ENCODE measurements at regions of chr16 and their contacts with region 1.

Region 1: DNA sequence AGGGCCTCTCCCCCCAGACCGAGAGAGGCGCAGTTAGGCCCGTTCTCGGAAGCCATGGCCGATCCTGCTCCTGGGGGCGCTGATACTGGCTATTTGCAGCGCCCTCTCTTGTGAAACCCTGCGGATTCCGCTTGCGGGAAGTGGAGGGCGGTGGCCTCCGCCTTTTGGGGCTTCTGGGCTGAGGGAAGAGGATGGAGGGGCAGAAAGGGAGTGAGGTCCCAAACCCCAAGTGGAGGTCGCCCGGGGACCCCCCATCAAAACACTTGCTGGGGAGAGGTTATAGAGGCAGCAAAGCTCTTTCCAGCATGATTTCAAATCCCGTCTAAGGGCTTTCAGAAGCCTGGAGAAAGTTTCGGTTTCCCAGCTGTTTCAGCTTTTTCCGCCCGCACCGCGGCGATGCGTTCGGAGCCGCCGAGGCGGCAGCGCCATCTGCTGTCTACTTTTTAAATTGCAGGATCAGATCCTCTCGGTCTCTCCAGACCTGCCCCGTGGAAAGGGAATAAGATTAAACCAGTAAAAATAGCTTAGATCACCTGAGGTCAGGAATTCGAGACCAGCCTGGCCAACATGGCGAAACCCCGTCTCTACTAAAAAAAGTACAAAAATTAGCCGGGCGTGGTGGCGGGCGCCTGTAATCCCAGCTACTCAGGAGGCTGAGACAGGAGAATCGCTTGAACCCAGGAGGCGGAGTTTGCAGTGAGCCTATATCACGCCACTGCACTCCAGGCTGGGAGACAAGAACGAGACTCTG is 15.8 kb downstream of the SNX20 start:
- DNase-seq: peak; percentile 89
- ATAC-seq: peak; percentile 54
- H3K4me3 Mint-ChIP-seq: peak overlapping the region; percentile 51
- H3K27ac Mint-ChIP-seq: peak overlapping the region; percentile 92
- H3K4me1 Mint-ChIP-seq: peaks cover 42% of the 10 kb centered on the region
- H3K27me3 Mint-ChIP-seq: no peaks in the 10 kb centered on the region

Region 2: GRCh38 chr16:50210266-50211038 is 454.9 kb before region 1 on chr16:
- CTCF ChIA-PET with region 1: interaction called, 16 read pairs
- DNase-seq: peak; percentile 80
- ATAC-seq: peak; percentile 90
- H3K4me3 Mint-ChIP-seq: no peak overlapping the region
- H3K27ac Mint-ChIP-seq: peak overlapping the region; percentile 31
- H3K4me1 Mint-ChIP-seq: peaks cover 34% of the 10 kb centered on the region
- H3K27me3 Mint-ChIP-seq: no peaks in the 10 kb centered on the region

Region 3: GRCh38 chr16:50354629-50355456 is 310.5 kb before region 1 on chr16:
- CTCF ChIA-PET with region 1: interaction called, 23 read pairs
- DNase-seq: no peak
- ATAC-seq: no peak
- H3K4me3 Mint-ChIP-seq: no peak overlapping the region
- H3K27ac Mint-ChIP-seq: no peak overlapping the region
- H3K4me1 Mint-ChIP-seq: peaks cover 11% of the 10 kb centered on the region
- H3K27me3 Mint-ChIP-seq: no peaks in the 10 kb centered on the region

Region 4: DNA sequence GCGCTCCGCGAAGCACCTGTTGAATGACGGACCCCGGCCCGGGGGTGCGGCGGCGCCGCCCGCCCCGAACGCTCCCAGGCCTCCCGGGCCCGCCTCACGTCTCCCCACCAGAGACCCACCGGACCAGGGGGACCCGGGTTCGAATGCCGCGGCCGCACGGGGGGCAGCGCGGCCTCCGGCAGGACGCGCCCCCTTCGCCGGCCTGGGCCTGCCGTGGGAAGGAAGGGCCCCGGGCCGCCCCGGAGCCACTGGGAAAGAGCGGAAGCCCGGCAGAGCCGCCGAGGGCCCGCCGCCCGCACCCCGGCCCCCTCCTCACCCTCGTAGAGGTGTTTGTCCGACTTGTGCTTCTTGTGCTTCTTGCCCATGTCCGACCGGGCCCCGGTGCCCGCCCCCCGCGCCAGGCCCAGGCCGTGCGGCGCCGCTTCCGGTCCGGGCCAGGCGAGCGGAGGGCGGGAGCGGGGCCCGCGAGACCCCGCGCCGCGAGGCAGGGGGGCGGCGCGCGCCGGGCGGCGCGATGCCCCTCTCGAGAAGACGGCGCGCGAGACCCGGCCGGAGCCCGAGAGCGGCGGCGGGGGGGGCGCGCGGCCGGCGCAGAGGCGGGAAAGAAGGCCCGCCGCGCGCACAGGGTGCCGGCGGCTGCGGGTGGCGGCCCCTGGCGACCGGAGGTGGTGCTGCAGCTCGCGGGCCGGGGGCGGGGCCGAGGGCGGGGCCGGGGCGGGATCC is 296.7 kb before region 1 on chr16 and contains the start of gene BRD7:
- CTCF ChIA-PET with region 1: interaction called, 12 read pairs
- DNase-seq: peak; percentile 70
- ATAC-seq: peak; percentile 86
- H3K4me3 Mint-ChIP-seq: peak within 1 kb of the TSS; percentile 95
- H3K27ac Mint-ChIP-seq: peak within 1 kb of the TSS; percentile 88
- H3K4me1 Mint-ChIP-seq: peaks cover 41% of the 10 kb centered on the region
- H3K27me3 Mint-ChIP-seq: peaks cover 1% of the 10 kb centered on the region
- total RNA-seq, gene BRD7: 85.0 to 102 TPM

Region 5: GRCh38 chr16:50548125-50548908 is 117.0 kb before region 1 on chr16 and contains the start of gene NKD1:
- CTCF ChIA-PET with region 1: interaction called, 11 read pairs
- DNase-seq: peak; percentile 72
- ATAC-seq: peak; percentile 86
- H3K4me3 Mint-ChIP-seq: peak within 1 kb of the TSS; percentile 76
- H3K27ac Mint-ChIP-seq: peak within 1 kb of the TSS; percentile 67
- H3K4me1 Mint-ChIP-seq: peaks cover 4% of the 10 kb centered on the region
- H3K27me3 Mint-ChIP-seq: peaks cover 47% of the 10 kb centered on the region
- total RNA-seq, gene NKD1: 0.33 to 2.1 TPM

Region 6: DNA sequence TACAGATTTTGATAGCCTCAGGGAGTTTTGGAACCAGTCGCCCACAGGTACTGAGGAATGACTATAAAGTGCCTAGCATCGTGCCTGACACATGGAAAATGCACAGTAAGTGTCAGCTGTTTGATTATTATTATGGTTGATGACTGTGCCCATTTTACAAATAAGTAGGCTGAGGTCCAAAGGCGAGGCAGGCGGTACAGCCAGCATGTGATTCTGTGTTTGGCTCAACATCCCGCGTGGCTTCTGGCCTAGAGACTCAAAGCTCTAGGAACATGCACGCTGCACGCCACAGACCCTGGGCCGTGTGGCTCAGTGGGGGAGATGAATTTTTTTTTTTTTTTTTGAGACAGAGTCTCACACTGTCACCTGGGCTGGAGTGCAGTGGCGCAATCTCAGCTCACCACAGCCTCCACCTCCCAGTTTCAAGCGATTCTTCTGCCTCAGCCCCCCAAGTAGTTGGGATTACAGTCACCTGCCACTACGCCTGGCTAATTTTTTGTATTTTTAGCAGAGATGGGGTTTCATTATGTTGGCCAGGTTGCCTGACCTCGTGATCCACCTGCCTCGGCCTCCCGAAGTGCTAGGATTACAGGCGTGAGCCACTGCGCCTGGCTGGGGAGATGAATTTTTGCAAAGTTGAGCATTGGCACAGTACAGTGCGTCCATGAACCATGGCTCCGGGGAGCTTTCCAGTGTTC is 59.4 kb before region 1 on chr16:
- CTCF ChIA-PET with region 1: no interaction called
- DNase-seq: no peak
- ATAC-seq: no peak
- H3K4me3 Mint-ChIP-seq: no peak overlapping the region
- H3K27ac Mint-ChIP-seq: no peak overlapping the region
- H3K4me1 Mint-ChIP-seq: peaks cover 3% of the 10 kb centered on the region
- H3K27me3 Mint-ChIP-seq: no peaks in the 10 kb centered on the region

Region 7: GRCh38 chr16:50681021-50681885 is 15.9 kb after region 1 on chr16 and contains the start of gene SNX20:
- CTCF ChIA-PET with region 1: interaction called, 140 read pairs
- DNase-seq: peak; percentile 82
- ATAC-seq: peak; percentile 67
- H3K4me3 Mint-ChIP-seq: peak within 1 kb of the TSS; percentile 81
- H3K27ac Mint-ChIP-seq: peak within 1 kb of the TSS; percentile 93
- H3K4me1 Mint-ChIP-seq: peaks cover 84% of the 10 kb centered on the region
- H3K27me3 Mint-ChIP-seq: no peaks in the 10 kb centered on the region
- total RNA-seq, gene SNX20: 60.0 to 72.1 TPM

Region 8: GRCh38 chr16:50741808-50742575 is 76.7 kb after region 1 on chr16 and contains the start of gene CYLD:
- CTCF ChIA-PET with region 1: interaction called, 252 read pairs
- DNase-seq: peak; percentile 100
- ATAC-seq: peak; percentile 95
- H3K4me3 Mint-ChIP-seq: peak within 1 kb of the TSS; percentile 93
- H3K27ac Mint-ChIP-seq: peak within 1 kb of the TSS; percentile 95
- H3K4me1 Mint-ChIP-seq: peaks cover 38% of the 10 kb centered on the region
- H3K27me3 Mint-ChIP-seq: no peaks in the 10 kb centered on the region
- total RNA-seq, gene CYLD: 135 to 195 TPM

Region 9: DNA sequence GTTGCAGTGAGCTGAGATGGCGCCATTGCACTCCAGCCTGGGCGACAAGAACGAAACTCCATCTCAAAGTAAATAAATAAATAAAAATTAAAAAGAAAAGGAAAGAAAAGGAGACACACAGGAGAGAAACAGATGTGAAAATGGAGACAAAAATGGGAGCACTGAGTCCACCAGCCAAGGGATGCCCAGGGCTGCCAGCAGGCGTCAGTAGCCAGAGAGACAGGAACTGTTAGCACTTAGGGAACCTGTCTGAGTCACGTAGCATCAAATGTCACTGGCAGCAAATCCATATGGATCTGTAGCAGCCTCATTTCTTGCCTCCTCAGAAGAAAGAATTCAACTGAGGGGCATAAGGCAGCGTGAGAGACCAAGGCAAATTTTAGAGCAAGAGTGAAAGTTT is 156.3 kb after region 1 on chr16:
- CTCF ChIA-PET with region 1: no interaction called
- DNase-seq: no peak
- ATAC-seq: no peak
- H3K4me3 Mint-ChIP-seq: no peak overlapping the region
- H3K27ac Mint-ChIP-seq: no peak overlapping the region
- H3K4me1 Mint-ChIP-seq: no peaks in the 10 kb centered on the region
- H3K27me3 Mint-ChIP-seq: peaks cover 26% of the 10 kb centered on the region

Measured in activated CD8-positive, alpha-beta memory T cell treated with anti-CD3 and anti-CD28 coated beads, Interleukin-2, amount 10 ng/mL, durations not matched to agents 7 days and 5 days (primary cell).